Mammary epithelial cell (primary cell): ENCODE measurements at regions of chr15 and their contacts with region 1.

Region 1: DNA sequence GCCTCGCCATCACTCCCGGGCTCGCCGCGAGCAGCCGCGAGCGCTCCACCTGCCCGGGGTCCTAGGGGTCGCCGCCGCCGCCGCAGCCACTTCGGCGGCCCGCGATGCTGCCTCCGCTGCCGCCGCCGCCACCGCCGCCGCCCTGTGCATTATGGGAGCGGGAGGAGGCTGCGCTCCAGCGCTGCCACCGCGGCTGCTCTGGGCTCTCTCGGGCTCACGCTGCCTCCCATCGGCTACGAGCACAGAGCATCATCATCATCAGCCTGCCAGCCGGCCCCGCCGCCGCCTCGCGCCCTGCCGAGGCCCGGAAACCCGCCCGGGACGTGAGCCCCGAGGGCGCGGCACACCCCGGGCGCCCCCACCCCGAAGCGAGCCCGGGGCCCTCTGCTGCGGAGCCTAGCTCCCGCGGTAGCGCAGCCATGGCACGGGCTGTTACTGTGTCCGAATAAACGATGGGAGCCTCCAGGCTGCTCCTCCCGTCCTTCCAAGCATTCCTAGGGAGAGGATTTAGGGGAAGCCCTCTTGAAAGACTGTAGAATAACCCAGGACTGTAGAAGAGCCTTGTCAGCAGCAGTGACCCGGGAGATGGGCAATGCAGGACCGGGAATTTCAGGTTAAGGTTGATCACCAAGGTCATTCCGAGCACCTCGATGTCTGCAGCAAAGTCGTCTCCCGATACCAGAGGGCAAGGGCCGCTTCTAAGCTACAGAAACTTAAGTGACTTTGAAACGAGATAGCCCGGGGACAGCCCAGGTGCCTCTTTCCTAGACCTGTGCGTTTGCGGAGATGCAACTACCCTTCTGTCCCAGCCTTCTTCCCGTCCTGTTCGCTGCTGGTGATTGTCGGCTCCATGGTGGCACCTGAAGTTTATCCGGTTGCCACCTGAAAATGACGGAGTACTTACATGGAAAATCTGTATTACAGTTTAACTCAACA is 579 bp upstream of the MYO5A start:
- DNase-seq: peak; percentile 76
- H3K4me3 ChIP-seq: peak overlapping the region; percentile 51 to 87 (median 74)
- H3K27ac ChIP-seq: peak overlapping the region; percentile 60
- H3K4me1 ChIP-seq: peaks cover 14% of the 10 kb centered on the region
- H3K27me3 ChIP-seq: no peaks in the 10 kb centered on the region
- CTCF ChIP-seq: no peak

Region 2: DNA sequence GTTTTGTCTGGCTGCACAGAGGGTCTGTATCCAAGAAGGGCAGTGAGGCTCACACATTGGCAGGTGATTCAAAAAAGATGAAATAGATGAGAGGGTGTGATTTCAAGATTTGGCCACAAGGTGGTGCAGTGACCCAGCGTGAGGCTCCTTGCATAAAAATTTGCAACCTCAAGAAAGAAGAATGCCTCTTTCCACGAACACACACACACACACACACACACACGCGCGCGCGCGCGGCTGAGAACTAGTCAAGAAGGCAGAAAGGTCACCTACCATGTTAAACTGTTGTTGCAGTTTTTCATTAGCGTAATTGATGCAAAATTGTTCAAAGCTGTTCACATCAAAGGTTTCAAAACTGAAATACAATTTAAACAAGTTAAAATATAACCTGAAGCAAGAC is 272.9 kb before region 1 on chr15:
- CTCF ChIA-PET with region 1: no interaction called
- dilution Hi-C with region 1: no loop called
- in situ Hi-C with region 1: no loop called
- intact Hi-C with region 1: loop called (anchors 1 kb)
- DNase-seq: peak; percentile 65
- H3K4me3 ChIP-seq: no peak overlapping the region
- H3K27ac ChIP-seq: no peak overlapping the region
- H3K4me1 ChIP-seq: peaks cover 32% of the 10 kb centered on the region
- H3K27me3 ChIP-seq: no peaks in the 10 kb centered on the region
- CTCF ChIP-seq: peak; percentile 74 to 76

Region 3: DNA sequence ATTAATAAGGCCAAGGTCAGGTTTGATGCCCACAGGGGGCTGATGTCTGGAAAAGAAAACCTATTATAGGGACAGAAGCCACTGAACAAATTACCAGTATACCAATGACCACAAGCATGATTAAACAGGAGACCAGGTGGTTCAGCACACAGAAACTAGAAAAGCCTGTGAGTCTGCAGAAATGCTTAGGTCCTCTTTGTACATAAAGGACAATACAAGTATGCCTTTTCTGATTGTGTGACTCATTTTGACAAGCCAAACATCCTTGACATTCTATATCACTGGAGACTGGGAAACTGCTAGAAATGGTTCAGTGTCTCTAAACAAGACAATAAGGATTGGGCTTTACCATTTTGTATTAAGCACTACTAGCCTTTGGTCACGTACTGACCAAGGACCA is 120.4 kb before region 1 on chr15:
- CTCF ChIA-PET with region 1: no interaction called
- dilution Hi-C with region 1: no loop called
- in situ Hi-C with region 1: no loop called
- intact Hi-C with region 1: loop called (anchors 5 kb)
- DNase-seq: peak; percentile 56
- H3K4me3 ChIP-seq: no peak overlapping the region
- H3K27ac ChIP-seq: no peak overlapping the region
- H3K4me1 ChIP-seq: no peaks in the 10 kb centered on the region
- H3K27me3 ChIP-seq: no peaks in the 10 kb centered on the region
- CTCF ChIP-seq: no peak

Region 4: GRCh38 chr15:52466134-52466701 is 63.0 kb before region 1 on chr15:
- CTCF ChIA-PET with region 1: no interaction called
- dilution Hi-C with region 1: no loop called
- in situ Hi-C with region 1: no loop called
- intact Hi-C with region 1: loop called (anchors 5 kb)
- DNase-seq: no peak
- H3K4me3 ChIP-seq: no peak overlapping the region
- H3K27ac ChIP-seq: no peak overlapping the region
- H3K4me1 ChIP-seq: peaks cover 8% of the 10 kb centered on the region
- H3K27me3 ChIP-seq: no peaks in the 10 kb centered on the region
- CTCF ChIP-seq: no peak

Region 5: DNA sequence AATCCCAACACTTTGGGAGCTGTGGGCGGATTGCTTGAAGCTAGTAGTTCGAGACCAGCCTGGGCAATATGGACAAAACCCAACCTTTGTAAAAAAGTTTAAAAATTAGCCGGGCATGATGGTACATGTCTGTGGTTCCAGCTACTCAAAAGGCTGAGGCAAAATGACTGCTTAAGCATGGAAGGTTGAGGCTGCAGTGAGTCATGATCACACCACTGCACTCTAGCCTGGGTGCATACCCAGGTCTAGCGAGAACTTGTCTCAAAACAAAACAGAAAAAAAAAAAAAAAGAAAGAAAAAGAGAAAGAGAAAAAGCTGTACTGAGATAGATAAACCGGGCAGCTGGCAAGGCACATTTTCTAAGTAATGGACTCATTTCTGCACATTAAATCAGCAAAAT is 28.9 kb after region 1 on chr15:
- CTCF ChIA-PET with region 1: no interaction called
- dilution Hi-C with region 1: no loop called
- in situ Hi-C with region 1: no loop called
- intact Hi-C with region 1: loop called (anchors 1 kb)
- DNase-seq: peak; percentile 96
- H3K4me3 ChIP-seq: peak overlapping the region; percentile 13 to 58 (median 49)
- H3K27ac ChIP-seq: peak overlapping the region; percentile 87
- H3K4me1 ChIP-seq: peaks cover 34% of the 10 kb centered on the region
- H3K27me3 ChIP-seq: no peaks in the 10 kb centered on the region
- CTCF ChIP-seq: no peak

Region 6: GRCh38 chr15:52735231-52736089 is 206.2 kb after region 1 on chr15:
- CTCF ChIA-PET with region 1: no interaction called
- dilution Hi-C with region 1: no loop called
- in situ Hi-C with region 1: no loop called
- intact Hi-C with region 1: loop called (anchors 1 kb)
- DNase-seq: peak; percentile 68
- H3K4me3 ChIP-seq: no peak overlapping the region
- H3K27ac ChIP-seq: no peak overlapping the region
- H3K4me1 ChIP-seq: peaks cover 9% of the 10 kb centered on the region
- H3K27me3 ChIP-seq: no peaks in the 10 kb centered on the region
- CTCF ChIP-seq: peak; percentile 70 to 71

Region 7: GRCh38 chr15:52857937-52858781 is 328.9 kb after region 1 on chr15:
- CTCF ChIA-PET with region 1: no interaction called
- dilution Hi-C with region 1: no loop called
- in situ Hi-C with region 1: no loop called
- intact Hi-C with region 1: no loop called
- DNase-seq: peak; percentile 3
- H3K4me3 ChIP-seq: no peak overlapping the region
- H3K27ac ChIP-seq: no peak overlapping the region
- H3K4me1 ChIP-seq: peaks cover 3% of the 10 kb centered on the region
- H3K27me3 ChIP-seq: no peaks in the 10 kb centered on the region
- CTCF ChIP-seq: no peak